Colonic mucosa (tissue), 4 donors: ENCODE measurements at regions of chr7 and their contacts with region 1.

Region 1: GRCh38 chr7:22488643-22489462 is 11.1 kb downstream of the STEAP1B start:
- DNase-seq: peak; percentile 82
- H3K4me3 ChIP-seq: no peak overlapping the region
- H3K27ac ChIP-seq: no peak overlapping the region
- H3K4me1 ChIP-seq: no peaks in the 10 kb centered on the region
- H3K27me3 ChIP-seq: no peaks in the 10 kb centered on the region
- CTCF ChIP-seq: peak; percentile 86

Region 2: GRCh38 chr7:21763818-21764217 is 725.0 kb before region 1 on chr7:
- intact Hi-C with region 1: no loop called
- DNase-seq: no peak
- H3K4me3 ChIP-seq: no peak overlapping the region
- H3K27ac ChIP-seq: no peak overlapping the region
- H3K4me1 ChIP-seq: no peaks in the 10 kb centered on the region
- H3K27me3 ChIP-seq: no peaks in the 10 kb centered on the region
- CTCF ChIP-seq: no peak

Region 3: DNA sequence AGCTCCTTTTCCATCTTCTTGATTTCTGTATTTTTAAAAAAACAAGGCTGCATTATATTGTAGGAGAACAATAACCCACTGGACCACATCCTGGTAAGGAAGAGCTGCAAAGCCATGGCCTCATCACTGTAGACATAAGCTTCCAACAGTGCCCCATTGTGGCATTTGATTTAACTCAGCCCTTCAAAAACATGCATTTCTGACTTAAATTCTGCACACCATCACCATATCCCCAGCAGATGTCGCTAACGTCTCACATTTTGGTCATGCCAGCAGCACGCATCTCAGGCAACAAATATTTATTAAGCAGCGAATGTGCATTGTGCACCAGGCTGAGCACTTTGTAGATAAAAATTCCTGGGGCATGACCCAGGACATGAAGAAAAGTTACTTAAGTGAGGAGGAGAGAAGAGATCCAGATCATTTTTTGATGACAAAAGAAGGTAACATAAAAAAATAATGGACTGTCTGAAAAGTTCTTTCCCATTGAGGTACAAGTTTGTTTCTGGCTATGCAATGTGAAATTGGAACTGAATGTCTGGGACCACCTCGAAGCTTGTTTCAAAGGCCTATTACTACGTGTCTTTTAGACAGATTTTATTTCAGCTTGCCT is 378.5 kb before region 1 on chr7:
- intact Hi-C with region 1: loop called (anchors 2 kb)
- DNase-seq: peak; percentile 70
- H3K4me3 ChIP-seq: no peak overlapping the region
- H3K27ac ChIP-seq: no peak overlapping the region
- H3K4me1 ChIP-seq: no peaks in the 10 kb centered on the region
- H3K27me3 ChIP-seq: no peaks in the 10 kb centered on the region
- CTCF ChIP-seq: peak; percentile 71

Region 4: GRCh38 chr7:22295402-22296264 is 193.2 kb before region 1 on chr7:
- intact Hi-C with region 1: loop called (anchors 10 kb)
- DNase-seq: no peak
- H3K4me3 ChIP-seq: no peak overlapping the region
- H3K27ac ChIP-seq: no peak overlapping the region
- H3K4me1 ChIP-seq: no peaks in the 10 kb centered on the region
- H3K27me3 ChIP-seq: no peaks in the 10 kb centered on the region
- CTCF ChIP-seq: no peak

Region 5: DNA sequence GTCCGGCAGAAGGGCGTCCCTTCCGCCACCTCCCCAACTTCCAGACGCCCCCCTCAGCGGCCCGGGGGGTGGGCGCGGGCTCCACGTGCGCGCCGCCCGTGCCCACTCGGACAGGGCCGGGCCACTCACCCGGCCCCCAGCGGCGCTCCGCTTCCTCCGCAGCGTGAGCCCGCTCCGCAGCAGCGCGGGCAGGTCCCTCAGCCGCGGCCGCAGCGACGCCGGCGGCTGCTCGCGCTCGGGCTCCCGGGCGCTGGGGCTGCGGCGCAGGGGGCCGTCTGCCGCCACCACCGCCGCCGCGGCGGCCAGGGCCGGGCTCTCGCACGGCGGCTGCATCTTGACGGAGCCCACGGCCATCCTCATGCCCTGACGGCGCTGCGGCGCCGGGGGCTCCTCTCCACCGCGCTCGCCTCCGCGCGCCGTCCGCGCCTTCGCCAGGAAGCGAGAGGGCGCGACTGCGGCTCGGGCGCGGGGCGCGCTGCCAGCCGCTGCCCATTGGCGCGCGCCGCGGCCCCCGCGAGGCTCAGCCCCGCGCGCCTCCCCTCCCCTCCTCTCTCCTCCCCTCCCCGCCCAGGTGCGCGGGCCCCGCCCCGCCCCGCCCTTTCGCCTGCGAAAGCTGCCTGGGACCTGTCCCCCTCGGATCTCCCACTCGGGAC is 132.0 kb before region 1 on chr7 and contains the start of gene RAPGEF5:
- intact Hi-C with region 1: no loop called
- DNase-seq: peak; percentile 78
- H3K4me3 ChIP-seq: peak within 1 kb of the TSS; percentile 56
- H3K27ac ChIP-seq: peak within 1 kb of the TSS; percentile 88
- H3K4me1 ChIP-seq: no peaks in the 10 kb centered on the region
- H3K27me3 ChIP-seq: no peaks in the 10 kb centered on the region
- CTCF ChIP-seq: no peak
- total RNA-seq, gene RAPGEF5: 39.9 to 42.2 TPM